ENCODE measurements at regions of chr12 and their contacts with region 1.

Region 1: DNA sequence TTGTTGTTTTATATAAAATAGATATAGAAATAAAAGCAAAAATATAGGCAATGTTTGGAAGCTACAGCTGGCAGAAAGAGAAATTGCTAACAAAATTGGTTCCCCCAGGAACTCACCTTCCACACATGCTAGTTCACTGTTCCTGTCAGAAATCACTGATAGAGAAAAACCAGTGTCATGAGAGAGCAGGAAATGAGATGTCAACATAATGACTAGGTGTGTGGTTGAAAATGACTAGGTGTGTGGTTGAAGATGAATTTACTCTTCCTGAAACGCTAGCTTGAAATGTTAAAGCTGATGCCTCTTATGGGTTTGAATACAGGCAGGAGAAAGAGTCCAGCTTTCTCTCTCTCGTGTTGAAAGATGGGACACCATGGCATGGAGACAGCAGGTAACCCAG is 216.3 kb downstream of the C12orf42 start:
- DNase-seq: no peak
- H3K4me3 Mint-ChIP-seq: no peak overlapping the region
- H3K27ac Mint-ChIP-seq: no peak overlapping the region
- H3K4me1 Mint-ChIP-seq: peaks cover 3% of the 10 kb centered on the region
- H3K27me3 Mint-ChIP-seq: peaks cover 2% of the 10 kb centered on the region

Region 2: GRCh38 chr12:101962486-101962885 is 1317.0 kb before region 1 on chr12:
- CTCF ChIA-PET with region 1: no interaction called
- intact Hi-C with region 1: loop called (anchors 10 kb)
- DNase-seq: no peak
- H3K4me3 Mint-ChIP-seq: no peak overlapping the region
- H3K27ac Mint-ChIP-seq: no peak overlapping the region
- H3K4me1 Mint-ChIP-seq: peaks cover 4% of the 10 kb centered on the region
- H3K27me3 Mint-ChIP-seq: no peaks in the 10 kb centered on the region

Region 3: DNA sequence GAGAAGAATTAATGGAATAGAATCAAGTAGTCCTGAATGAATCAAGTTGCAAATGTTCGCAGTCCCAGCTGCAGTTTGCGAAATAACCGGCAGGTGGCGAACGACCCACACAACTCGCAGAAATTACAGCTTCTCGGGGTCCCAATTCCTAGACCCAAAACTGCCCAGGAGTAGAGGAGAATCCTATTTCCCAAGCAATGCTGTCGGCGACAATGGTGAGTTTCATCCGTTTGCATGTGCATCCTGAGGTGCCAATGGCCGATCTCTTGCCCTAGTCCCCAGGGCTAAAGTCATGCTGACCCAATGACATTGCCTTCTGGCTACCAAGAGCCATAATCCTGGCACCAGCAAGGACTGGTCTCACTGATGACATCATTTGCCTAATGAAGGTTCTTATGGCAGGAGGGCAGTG is 330.5 kb before region 1 on chr12:
- CTCF ChIA-PET with region 1: no interaction called
- intact Hi-C with region 1: loop called (anchors 5 kb)
- DNase-seq: peak; percentile 65
- H3K4me3 Mint-ChIP-seq: no peak overlapping the region
- H3K27ac Mint-ChIP-seq: no peak overlapping the region
- H3K4me1 Mint-ChIP-seq: peaks cover 13% of the 10 kb centered on the region
- H3K27me3 Mint-ChIP-seq: peaks cover 66% of the 10 kb centered on the region

Measured in activated naive CD4-positive, alpha-beta T cell treated with anti-CD3 and anti-CD28 coated beads for 36 hours (primary cell).